Activated CD4-positive, alpha-beta memory T cell treated with anti-CD3 and anti-CD28 coated beads for 36 hours (primary cell): ENCODE measurements at regions of chr17 and their contacts with region 1.

Region 1: GRCh38 chr17:47895856-47896671 is at the start of gene SP2:
- DNase-seq: peak; percentile 100
- H3K4me3 Mint-ChIP-seq: peak within 1 kb of the TSS; percentile 95
- H3K27ac Mint-ChIP-seq: peak within 1 kb of the TSS; percentile 87
- H3K4me1 Mint-ChIP-seq: peaks cover 34% of the 10 kb centered on the region
- H3K27me3 Mint-ChIP-seq: no peaks in the 10 kb centered on the region
- total RNA-seq, gene SP2: 15.1 to 17.2 TPM

Region 2: DNA sequence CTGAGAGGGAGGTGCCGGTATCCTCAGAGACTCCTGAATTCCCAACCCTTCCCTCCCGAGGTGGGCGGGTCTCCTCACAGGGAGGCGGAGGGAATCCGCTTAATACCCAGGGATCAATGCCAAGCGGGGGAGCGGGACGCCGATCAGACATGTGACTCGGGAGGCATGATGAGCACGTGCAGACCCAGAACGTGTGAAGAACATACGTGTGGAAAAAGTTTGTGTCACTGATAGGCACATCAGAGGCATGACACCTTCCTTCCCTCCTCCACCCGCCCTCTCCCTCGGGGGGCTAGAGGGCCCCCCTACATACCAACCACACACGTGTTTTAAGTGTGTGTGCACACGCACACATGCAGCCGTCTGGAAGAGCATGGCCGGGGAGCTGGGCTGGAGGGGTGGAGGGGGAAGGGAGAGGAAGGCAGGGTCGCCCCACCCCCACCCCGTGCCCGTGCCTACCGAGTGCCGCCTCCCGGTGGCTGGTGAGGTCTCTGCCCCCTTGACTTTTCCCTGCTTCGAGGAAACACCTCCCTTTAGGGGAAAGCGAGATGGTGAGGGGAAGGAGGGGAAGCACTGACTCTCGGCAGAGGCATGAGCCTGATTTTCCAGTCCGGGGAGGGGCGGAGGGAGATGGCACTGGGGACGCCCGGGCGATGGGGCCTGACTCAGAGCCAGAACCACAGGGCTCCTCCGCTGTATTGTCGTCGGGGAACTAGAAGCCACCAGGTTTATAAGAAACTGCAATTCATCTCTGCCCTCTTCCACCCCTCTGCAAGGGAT is 175.1 kb before region 1 on chr17:
- CTCF ChIA-PET with region 1: no interaction called
- POLR2A ChIA-PET with region 1: no interaction called
- intact Hi-C with region 1: no loop called
- DNase-seq: peak; percentile 99
- H3K4me3 Mint-ChIP-seq: peak overlapping the region; percentile 72
- H3K27ac Mint-ChIP-seq: peak overlapping the region; percentile 94
- H3K4me1 Mint-ChIP-seq: peaks cover 92% of the 10 kb centered on the region
- H3K27me3 Mint-ChIP-seq: no peaks in the 10 kb centered on the region

Region 3: DNA sequence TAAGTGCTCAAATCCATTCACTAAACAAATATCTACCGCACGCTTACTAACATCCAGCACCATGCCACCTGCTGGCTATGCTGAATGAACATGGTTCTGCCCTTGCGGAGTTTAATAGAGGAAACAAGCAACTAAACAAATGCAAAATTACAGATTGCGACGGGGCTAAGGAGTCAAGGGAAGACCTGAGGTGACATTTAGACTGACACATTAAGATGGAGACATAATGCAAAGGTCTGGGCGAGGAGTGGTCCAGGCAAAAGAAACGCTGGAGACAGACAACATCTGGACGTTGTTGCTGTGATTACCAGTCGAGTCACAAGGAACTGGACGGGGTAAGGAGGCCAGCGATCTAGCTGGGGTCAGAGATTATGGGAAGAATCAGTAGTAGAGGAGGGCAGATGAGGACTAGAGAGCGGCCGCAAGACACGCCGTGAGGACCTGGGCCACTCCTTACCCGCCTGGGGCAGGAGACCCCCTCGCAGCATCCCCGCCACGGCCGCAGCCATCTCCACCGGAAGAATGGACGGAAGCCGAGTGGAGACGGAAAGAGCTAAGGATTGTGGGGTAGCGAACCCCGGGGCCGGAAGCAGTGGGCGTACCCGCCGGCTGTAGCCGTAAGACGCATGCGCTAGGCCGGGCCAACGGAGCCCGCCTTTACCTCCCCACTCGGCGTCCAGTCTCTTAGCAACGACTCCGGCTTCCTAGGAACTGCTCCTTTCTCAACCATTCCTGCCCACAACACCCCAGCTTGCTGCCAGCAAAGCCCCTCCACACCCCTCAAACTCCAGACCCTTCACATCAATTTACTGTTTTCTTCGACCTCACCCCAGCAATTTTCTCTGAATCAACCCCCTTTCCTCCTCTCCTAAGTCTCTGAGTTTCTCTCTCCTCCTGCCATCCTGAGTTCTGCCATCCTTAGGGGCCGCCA is 64.8 kb before region 1 on chr17 and contains the starts of genes LRRC46 and MRPL10:
- CTCF ChIA-PET with region 1: interaction called, 672 read pairs
- POLR2A ChIA-PET with region 1: interaction called, 11 read pairs
- intact Hi-C with region 1: no loop called
- DNase-seq: peak; percentile 96
- H3K4me3 Mint-ChIP-seq: peak within 1 kb of the TSS; percentile 85
- H3K27ac Mint-ChIP-seq: peak within 1 kb of the TSS; percentile 81
- H3K4me1 Mint-ChIP-seq: peaks cover 50% of the 10 kb centered on the region
- H3K27me3 Mint-ChIP-seq: no peaks in the 10 kb centered on the region
- total RNA-seq, gene LRRC46: 0.29 to 0.59 TPM
- total RNA-seq, gene MRPL10: 69.9 to 72.4 TPM

Region 4: DNA sequence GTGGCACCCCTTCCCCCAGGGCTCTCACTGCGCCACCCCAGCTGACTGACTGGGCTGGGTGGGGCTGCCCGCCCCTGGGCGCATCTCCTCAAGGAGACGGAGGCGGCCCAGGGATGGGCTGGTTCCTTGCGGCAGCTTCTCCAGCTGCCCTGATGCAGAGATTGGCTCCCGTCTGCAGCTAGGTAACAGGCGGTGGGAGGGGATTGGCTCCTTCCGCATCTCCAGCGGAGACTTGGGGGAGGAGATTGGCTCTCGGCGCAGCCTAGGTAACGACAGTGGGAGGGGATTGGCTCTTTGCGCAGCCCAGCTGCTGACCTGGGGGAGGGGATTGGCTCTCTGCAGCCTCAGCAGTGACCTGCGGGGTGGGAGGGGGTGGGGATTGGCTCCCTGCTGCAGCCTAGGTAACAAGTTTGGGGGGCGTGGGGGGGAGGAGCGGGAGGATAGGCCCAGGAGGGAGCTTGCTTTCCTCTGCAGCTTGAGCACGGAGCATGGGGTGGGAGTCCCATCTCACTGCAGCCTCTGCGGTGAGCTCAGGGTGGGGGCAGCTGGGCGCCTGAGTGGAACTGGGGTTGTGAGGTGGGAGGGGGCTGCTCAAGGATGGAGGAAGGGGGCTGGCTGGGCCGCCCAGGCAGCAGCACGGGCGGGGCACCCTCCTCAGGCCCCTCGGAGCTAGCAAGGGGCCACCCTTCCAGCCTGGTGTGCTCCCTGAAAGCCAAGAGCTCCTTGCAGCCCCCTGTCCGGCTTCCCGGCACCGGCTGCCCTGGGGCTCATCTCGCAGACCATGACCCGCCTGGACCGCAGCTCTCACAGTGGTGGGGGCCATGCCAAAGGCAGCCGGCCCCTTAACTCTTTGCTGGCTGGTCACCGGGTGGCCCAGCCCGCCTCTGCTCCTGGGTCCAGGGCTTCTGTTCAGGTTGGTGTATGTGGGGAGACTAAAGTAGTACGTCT is 158.4 kb after region 1 on chr17:
- CTCF ChIA-PET with region 1: no interaction called
- POLR2A ChIA-PET with region 1: no interaction called
- intact Hi-C with region 1: no loop called
- DNase-seq: no peak
- H3K4me3 Mint-ChIP-seq: peak overlapping the region; percentile 65
- H3K27ac Mint-ChIP-seq: peak overlapping the region; percentile 99
- H3K4me1 Mint-ChIP-seq: peaks cover 69% of the 10 kb centered on the region
- H3K27me3 Mint-ChIP-seq: no peaks in the 10 kb centered on the region

Region 5: GRCh38 chr17:48107168-48108132 is 211.4 kb after region 1 on chr17 and contains the start of gene SNX11:
- CTCF ChIA-PET with region 1: no interaction called
- POLR2A ChIA-PET with region 1: no interaction called
- intact Hi-C with region 1: loop called (anchors 5 kb)
- DNase-seq: peak; percentile 95
- H3K4me3 Mint-ChIP-seq: peak within 1 kb of the TSS; percentile 100
- H3K27ac Mint-ChIP-seq: peak within 1 kb of the TSS; percentile 97
- H3K4me1 Mint-ChIP-seq: peaks cover 59% of the 10 kb centered on the region
- H3K27me3 Mint-ChIP-seq: no peaks in the 10 kb centered on the region
- total RNA-seq, gene SNX11: 19.7 to 21.7 TPM